ENCODE measurements at regions of chr3 and their contacts with region 1.

Region 1: GRCh38 chr3:80297751-80298150 is 530.0 kb upstream of the ROBO1 start:
- DNase-seq: no peak
- H3K4me3 ChIP-seq: no peak overlapping the region
- H3K27ac ChIP-seq: no peak overlapping the region
- H3K4me1 ChIP-seq: no peaks in the 10 kb centered on the region
- H3K27me3 ChIP-seq: no peaks in the 10 kb centered on the region
- CTCF ChIP-seq: no peak

Region 2: DNA sequence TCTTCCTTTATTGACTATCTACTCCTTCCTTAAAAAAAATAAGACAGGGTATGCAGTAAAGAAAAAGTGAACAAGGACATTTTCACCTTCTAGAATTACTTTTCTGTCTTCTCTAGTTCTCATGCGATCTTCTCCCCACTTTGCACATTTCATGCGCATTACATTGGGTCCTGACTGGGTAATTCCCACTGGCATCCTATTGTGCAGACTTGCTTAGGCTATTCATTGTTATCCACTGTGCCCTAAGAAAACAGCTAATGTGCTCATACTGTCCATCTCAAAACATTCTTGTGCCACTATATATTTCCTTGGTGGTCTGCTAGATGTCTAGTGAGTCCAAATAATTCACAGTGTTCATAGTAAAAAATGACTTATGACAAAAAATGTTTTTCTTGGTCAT is 82.6 kb before region 1 on chr3:
- CTCF ChIA-PET with region 1: no interaction called
- POLR2A ChIA-PET with region 1: interaction called, 11 read pairs
- intact Hi-C with region 1: no loop called
- DNase-seq: no peak
- H3K4me3 ChIP-seq: no peak overlapping the region
- H3K27ac ChIP-seq: no peak overlapping the region
- H3K4me1 ChIP-seq: no peaks in the 10 kb centered on the region
- H3K27me3 ChIP-seq: no peaks in the 10 kb centered on the region
- CTCF ChIP-seq: no peak